Panc1 (cell line): ENCODE measurements at regions of chr14 and their contacts with region 1.

Region 1: GRCh38 chr14:63535918-63536317 is 7.3 kb downstream of the PPP2R5E start:
- DNase-seq: no peak
- ATAC-seq: no peak
- H3K4me3 ChIP-seq: no peak overlapping the region
- H3K27ac ChIP-seq: no peak overlapping the region
- H3K4me1 ChIP-seq: no peaks in the 10 kb centered on the region; the same call in 1 of the 2 replicates
- H3K27me3 ChIP-seq: no peaks in the 10 kb centered on the region
- CTCF ChIP-seq: no peak

Region 2: GRCh38 chr14:63670692-63671091 is 134.8 kb after region 1 on chr14:
- CTCF ChIA-PET with region 1: interaction called, 11 read pairs
- POLR2A ChIA-PET with region 1: no interaction called
- in situ Hi-C with region 1: no loop called
- intact Hi-C with region 1: no loop called
- DNase-seq: no peak
- ATAC-seq: no peak
- H3K4me3 ChIP-seq: no peak overlapping the region
- H3K27ac ChIP-seq: no peak overlapping the region
- H3K4me1 ChIP-seq: peaks cover 7% of the 10 kb centered on the region; the same call in 1 of the 2 replicates
- H3K27me3 ChIP-seq: no peaks in the 10 kb centered on the region
- CTCF ChIP-seq: no peak

Region 3: DNA sequence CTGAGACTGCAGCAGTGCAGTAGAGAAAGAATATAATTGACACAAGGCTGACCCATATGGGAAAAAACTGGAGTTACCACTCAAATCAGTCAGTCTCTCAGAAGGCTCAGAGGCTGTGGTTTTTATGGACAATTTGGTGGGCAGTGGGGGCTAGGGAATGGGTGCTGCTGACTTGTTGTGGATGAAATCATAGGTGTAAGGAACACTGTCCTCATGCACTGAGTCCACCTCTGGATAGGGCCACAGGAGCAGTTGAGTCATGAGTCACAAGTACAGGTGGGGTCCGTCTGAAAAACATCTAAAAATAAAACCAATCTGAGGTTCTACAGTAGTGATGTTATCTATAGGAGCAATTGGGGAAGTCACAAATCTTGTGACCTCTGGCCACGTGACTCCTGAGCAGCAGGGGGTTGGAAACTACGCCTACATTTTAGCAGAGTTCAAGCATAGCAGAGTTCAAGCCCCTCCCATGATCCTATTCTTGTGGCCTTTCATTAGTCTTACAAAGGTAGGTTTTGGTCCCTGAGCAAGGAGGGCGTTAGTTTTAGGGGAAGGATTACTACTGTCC is 210.0 kb after region 1 on chr14:
- CTCF ChIA-PET with region 1: no interaction called
- POLR2A ChIA-PET with region 1: no interaction called
- in situ Hi-C with region 1: no loop called
- intact Hi-C with region 1: no loop called
- DNase-seq: no peak
- ATAC-seq: no peak
- H3K4me3 ChIP-seq: no peak overlapping the region
- H3K27ac ChIP-seq: no peak overlapping the region
- H3K4me1 ChIP-seq: no peaks in the 10 kb centered on the region; the same call in 1 of the 2 replicates
- H3K27me3 ChIP-seq: no peaks in the 10 kb centered on the region
- CTCF ChIP-seq: no peak